Activated naive CD4-positive, alpha-beta T cell treated with anti-CD3 and anti-CD28 coated beads for 36 hours (primary cell): ENCODE measurements at regions of chr2 and their contacts with region 1.

Region 1: GRCh38 chr2:37730037-37730818 is 58.8 kb upstream of the CDC42EP3 start:
- DNase-seq: no peak
- H3K4me3 Mint-ChIP-seq: no peak overlapping the region
- H3K27ac Mint-ChIP-seq: no peak overlapping the region
- H3K4me1 Mint-ChIP-seq: peaks cover 6% of the 10 kb centered on the region
- H3K27me3 Mint-ChIP-seq: peaks cover 1% of the 10 kb centered on the region

Region 2: DNA sequence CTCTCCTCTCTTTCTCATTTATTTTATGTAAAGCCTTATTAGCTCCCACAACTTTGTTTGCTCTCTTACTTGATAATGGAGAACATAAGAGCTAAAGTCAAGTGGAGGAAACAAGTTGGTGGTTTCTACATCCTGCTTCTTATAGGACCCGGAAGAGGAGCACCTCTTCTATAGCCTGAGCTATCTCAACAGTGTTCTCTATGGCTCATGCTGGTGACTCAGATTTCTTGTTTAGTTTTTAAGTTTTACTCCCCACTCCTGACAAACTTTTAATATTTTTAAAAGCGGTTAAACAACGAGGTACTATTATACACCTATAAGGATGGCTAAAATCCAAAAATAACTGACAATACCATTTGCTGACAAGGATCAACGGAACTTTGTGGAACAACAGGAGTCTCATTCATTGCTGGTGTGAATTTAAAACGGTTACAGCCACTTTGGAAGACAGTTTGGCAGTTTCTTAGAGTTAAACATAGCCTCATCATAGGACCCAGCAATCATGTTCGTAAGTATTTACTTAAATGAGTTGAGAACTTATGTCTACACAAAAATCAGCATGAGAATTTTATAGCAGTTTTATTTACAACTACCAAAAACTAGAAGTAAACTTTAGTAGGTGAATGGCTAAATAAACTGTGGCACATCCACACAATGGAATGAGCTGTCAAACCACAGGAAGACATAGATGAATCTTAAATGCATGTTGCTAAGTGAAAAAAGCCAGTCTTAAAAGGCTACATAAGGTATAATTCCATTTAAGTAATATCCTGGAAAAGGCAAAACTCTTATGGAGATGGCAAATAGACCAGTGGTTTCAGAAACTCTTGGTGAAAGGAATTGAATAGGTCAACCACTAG is 46.1 kb before region 1 on chr2:
- CTCF ChIA-PET with region 1: no interaction called
- intact Hi-C with region 1: loop called (anchors 2 kb)
- DNase-seq: no peak
- H3K4me3 Mint-ChIP-seq: no peak overlapping the region
- H3K27ac Mint-ChIP-seq: peak overlapping the region; percentile 81
- H3K4me1 Mint-ChIP-seq: peaks cover 26% of the 10 kb centered on the region
- H3K27me3 Mint-ChIP-seq: no peaks in the 10 kb centered on the region